MCF 10A (cell line): ENCODE measurements at regions of chr1 and their contacts with region 1.

Region 1: DNA sequence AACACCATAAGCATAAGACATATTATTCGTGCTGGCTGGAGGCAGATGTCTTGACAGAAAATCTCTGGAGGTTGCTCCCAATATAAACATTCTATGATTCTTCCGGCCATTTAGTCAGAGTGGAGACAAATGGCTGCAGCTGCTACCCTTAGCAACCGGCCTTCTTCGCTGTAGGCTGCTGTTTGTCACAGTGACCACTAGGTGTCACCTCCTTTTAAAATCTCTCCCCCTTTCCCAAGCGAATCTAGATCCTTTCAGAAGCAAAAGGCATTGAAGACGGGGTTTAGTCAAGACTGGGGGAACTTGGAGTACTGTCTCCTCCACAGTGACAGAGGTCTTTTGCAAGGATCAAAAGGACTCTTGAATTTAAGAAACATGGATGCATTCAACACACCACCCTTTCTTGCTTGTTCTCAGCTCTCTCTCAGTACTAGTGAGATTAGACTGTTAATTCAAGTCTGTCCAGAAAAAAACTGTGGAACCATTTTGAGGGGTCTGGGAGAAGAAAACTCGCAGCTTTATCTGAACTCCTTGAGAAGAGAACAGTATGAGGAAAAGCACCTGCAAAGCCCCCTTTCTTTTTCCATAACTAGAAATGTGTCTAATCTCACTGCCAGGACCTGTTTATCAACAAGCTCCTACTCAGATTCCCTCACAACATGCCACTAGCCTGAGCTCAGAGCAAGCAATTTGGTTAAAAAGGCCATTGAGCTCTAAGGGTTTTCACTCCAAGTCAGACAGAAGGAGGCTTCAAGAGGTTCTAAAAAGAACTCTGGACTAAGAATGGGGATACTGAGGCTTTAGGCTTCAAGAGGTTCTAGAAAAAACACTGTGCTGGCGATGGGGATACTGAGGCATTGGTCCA is 408.3 kb upstream of the PLXNA2 start:
- DNase-seq: peak; percentile 83
- H3K4me3 Mint-ChIP-seq: no peak overlapping the region
- H3K27ac Mint-ChIP-seq: no peak overlapping the region
- H3K4me1 Mint-ChIP-seq: peaks cover 13% of the 10 kb centered on the region
- H3K27me3 Mint-ChIP-seq: peaks cover 21% of the 10 kb centered on the region
- CTCF ChIP-seq: peak; percentile 98

Region 2: DNA sequence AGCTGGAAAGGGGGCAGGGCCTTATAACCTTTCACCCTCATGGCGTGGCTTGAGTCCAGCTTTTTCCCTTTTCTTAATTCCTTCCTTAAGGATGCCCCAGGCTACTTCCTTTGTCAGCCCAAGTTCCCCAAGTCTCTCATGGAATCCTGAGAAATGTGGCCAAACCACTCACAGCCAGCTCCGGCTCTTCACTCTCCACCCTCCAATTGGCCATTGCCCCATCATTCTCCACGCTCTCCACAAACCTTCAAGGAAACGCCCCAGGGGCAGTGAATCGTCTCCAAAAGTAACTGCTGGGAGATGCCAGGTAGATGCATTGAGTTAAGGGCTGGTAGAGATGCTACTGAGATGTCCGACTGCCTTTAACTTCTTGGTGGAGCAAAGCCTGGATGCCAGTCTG is 628.1 kb before region 1 on chr1:
- CTCF ChIA-PET with region 1: interaction called, 19 read pairs
- POLR2A ChIA-PET with region 1: no interaction called
- intact Hi-C with region 1: loop called (anchors 5 kb)
- DNase-seq: peak; percentile 21
- H3K4me3 Mint-ChIP-seq: no peak overlapping the region
- H3K27ac Mint-ChIP-seq: peak overlapping the region; percentile 41
- H3K4me1 Mint-ChIP-seq: no peaks in the 10 kb centered on the region
- H3K27me3 Mint-ChIP-seq: peaks cover 8% of the 10 kb centered on the region
- CTCF ChIP-seq: no peak

Region 3: GRCh38 chr1:208668991-208669390 is 16.5 kb after region 1 on chr1:
- CTCF ChIA-PET with region 1: interaction called, 32 read pairs
- POLR2A ChIA-PET with region 1: no interaction called
- intact Hi-C with region 1: no loop called
- DNase-seq: peak; percentile 65
- H3K4me3 Mint-ChIP-seq: no peak overlapping the region
- H3K27ac Mint-ChIP-seq: no peak overlapping the region
- H3K4me1 Mint-ChIP-seq: no peaks in the 10 kb centered on the region
- H3K27me3 Mint-ChIP-seq: peaks cover 39% of the 10 kb centered on the region
- CTCF ChIP-seq: no peak

Region 4: DNA sequence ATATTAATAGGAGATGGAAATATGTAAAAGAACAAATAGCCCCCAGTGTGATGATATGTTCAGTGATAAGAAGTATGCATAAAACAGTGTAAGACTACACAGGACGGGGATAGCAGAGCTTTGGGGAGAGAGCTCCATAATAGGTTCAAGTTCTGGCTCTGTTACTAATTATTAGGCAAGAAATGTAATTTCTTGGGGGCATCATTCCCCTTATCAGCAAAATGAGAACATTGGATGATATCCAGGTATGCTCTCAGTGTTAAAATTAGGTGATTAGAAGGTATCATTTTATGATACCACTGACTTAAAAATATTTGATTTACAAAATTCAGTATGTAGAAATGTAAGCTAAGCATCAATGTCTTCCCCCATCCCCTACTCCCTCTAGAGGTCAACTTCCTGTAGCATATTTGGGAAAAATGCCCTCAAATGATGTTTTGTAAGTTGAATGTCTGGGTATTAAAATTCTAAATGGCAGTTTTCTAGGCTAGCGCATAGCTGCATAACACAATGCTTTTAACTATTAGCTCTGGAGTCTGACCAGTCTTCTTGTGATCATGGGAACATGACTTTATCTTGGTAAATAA is 345.3 kb after region 1 on chr1:
- CTCF ChIA-PET with region 1: interaction called, 30 read pairs
- POLR2A ChIA-PET with region 1: no interaction called
- intact Hi-C with region 1: loop called (anchors 1 kb)
- DNase-seq: peak; percentile 70
- H3K4me3 Mint-ChIP-seq: no peak overlapping the region
- H3K27ac Mint-ChIP-seq: no peak overlapping the region
- H3K4me1 Mint-ChIP-seq: no peaks in the 10 kb centered on the region
- H3K27me3 Mint-ChIP-seq: no peaks in the 10 kb centered on the region
- CTCF ChIP-seq: peak; percentile 82

Region 5: GRCh38 chr1:209176866-209177430 is 524.4 kb after region 1 on chr1:
- CTCF ChIA-PET with region 1: interaction called, 11 read pairs
- POLR2A ChIA-PET with region 1: no interaction called
- intact Hi-C with region 1: no loop called
- DNase-seq: no peak
- H3K4me3 Mint-ChIP-seq: no peak overlapping the region
- H3K27ac Mint-ChIP-seq: no peak overlapping the region
- H3K4me1 Mint-ChIP-seq: peaks cover 7% of the 10 kb centered on the region
- H3K27me3 Mint-ChIP-seq: peaks cover 27% of the 10 kb centered on the region
- CTCF ChIP-seq: no peak

Region 6: DNA sequence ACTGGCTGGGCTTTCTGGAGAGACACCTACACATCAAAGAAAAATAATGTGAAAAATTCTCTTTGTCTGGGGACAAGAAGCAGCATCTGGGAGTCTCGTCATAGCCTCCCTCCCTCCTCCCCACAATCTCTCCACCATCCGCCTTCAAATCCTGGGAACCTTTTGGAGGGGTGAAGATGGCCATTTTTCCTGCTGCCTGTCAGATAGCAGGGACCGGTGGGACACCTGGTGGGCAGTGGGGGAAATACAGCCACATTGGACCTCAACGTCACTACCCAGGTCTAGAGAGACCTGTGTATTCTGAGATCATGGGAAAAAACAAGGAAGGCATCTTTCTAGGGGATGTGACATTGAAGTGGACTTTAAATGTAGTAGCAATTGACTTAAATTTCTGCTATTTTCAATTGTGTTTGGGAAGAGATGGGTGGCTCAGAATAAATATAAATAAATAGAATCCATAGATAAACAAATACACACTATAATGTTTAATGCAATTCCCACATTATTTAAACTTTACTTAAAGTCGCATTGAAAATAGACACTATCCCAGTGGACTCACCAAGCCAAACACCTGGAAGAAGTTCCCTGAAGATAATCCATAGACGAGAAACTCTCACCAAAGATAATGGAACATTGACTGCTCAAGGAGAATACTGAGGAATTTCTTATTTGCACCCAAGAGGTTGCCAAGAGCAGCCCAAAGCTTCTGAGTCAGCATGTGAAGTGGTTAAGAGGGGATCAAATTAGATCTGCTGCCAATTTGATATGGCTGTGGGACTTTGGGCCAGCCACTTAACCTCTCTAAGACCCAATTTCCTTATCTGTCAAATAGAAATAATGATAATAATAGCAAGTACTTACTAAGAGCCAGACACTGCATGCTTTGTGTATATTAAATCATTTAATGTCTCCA is 783.4 kb after region 1 on chr1:
- CTCF ChIA-PET with region 1: interaction called, 3 read pairs
- POLR2A ChIA-PET with region 1: no interaction called
- intact Hi-C with region 1: loop called (anchors 1 kb)
- DNase-seq: peak; percentile 97
- H3K4me3 Mint-ChIP-seq: no peak overlapping the region
- H3K27ac Mint-ChIP-seq: peak overlapping the region; percentile 90
- H3K4me1 Mint-ChIP-seq: peaks cover 51% of the 10 kb centered on the region
- H3K27me3 Mint-ChIP-seq: no peaks in the 10 kb centered on the region
- CTCF ChIP-seq: peak; percentile 100